Posterior vena cava (tissue), 2 donors: ENCODE measurements at regions of chr18 and their contacts with region 1.

Region 1: DNA sequence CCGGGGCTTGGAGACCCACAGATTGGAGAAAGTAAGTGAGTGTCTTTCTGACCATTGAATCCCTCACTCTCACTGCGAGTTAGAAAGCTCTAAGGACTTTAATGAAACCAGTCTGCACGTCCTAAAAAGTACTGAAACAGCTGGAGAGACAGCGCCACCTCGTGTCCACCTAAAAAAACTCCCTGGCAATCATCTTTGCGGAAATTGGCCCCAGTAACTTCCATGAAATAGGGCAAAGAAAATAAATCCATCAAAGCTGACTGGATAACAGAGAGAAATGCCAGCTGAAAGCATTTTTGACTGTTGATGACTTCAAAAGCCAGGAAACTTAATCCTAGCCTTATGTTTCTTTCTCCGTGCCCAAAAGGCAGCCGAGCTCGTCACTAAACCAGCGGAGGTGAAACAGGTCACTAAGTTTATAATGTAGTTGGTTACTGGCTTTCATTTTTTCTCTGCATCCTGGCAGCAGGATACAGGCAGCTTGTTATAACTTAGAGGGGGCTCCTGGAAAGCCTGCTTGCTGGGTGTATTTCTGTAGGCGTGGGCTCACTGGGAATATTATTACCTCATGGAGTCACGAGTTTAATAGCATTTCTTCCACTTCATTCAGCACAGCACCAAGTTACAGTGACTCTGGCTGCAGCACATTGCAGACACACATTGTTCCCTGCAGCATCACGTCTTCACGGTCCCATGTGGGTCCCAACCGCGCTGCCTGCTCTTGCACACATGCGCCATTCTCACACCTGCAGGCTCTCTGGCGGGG is 266.5 kb downstream of the HRH4 start:
- DNase-seq: peak; percentile 86

Region 2: GRCh38 chr18:24488824-24489493 is 238.0 kb before region 1 on chr18:
- intact Hi-C with region 1: loop called in 1 of 2 experiments (anchors 10 kb)
- DNase-seq: no peak

Region 3: DNA sequence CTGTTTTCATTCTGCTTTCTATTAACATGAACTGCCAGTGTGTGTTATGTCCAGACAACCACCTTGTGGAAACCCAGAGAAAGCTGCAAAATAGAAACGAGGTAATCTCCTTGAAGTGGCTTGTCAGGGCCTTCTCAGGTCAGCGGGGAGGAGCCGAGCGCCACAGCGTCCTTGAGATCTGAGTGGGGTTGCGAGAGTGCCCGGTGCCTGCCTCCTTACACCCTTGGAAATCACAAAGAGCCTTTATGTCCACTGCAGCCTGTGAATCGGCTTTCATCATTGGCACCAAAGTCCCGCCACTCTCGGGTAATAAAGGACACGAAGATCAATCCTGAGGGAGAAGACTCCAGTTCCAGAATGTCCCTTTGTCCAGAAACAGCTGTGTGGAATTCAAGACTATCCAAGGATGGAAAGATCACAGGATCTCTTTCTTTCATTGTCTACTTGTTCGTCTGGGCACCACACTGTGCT is 131.3 kb before region 1 on chr18:
- intact Hi-C with region 1: loop called in 1 of 2 experiments (anchors 5 kb)
- DNase-seq: no peak

Region 4: DNA sequence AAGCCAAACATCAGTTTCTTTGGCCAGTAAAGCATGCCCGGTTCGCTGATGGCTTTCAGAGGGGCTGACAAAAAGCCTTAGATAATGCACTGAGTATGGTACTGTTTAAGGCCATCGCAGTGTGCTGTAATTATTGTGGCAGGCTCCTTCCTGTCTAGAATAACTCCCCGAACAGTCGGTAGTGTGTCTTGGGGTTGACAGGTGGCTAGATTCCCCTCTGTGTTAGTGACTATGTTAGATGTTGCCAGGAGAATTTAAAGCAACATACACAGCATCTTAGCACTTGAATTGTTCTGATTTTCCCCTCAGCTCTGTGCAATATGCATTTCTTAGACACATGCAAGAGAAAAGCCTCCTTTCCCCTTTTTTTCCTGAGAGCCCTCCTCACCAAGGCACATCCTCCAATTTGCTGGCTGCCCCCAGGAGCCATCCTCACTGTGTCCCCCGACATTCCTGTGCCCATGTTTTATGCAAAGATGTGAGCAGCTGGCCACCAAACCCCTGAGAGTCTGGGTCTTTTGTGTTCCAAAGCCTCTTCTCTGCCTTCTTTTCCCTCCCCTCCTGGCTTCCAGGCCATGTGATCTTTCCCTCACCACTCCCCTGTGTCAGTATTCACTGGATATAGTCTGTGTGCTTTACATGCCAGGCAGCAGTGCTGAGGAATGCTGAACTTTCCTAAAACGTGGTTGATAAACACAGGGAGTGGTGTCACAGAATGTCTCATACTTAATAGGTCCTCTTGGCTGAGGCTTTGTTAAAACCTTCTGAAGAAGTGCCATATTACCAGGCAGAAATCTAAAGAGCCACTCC is 65.0 kb after region 1 on chr18:
- intact Hi-C with region 1: no loop called
- DNase-seq: no peak